Endothelial cell of umbilical vein (primary cell): ENCODE measurements at regions of chr11 and their contacts with region 1.

Region 1: GRCh38 chr11:9460322-9461067 is at the start of gene ZNF143:
- DNase-seq: peak; percentile 100
- H3K4me3 ChIP-seq: peak within 1 kb of the TSS; percentile 92 to 97 (median 94)
- H3K27ac ChIP-seq: peak within 1 kb of the TSS; percentile 95
- H3K4me1 ChIP-seq: peaks cover 15% of the 10 kb centered on the region
- H3K27me3 ChIP-seq: no peaks in the 10 kb centered on the region
- CTCF ChIP-seq: no peak
- POLR2A ChIP-seq: peak; percentile 72
- total RNA-seq, gene ZNF143: 19.0 and 22.1 TPM in 2 replicates

Region 2: GRCh38 chr11:9265211-9266131 is 195.0 kb before region 1 on chr11 and contains the start of gene DENND5A:
- CTCF ChIA-PET with region 1: no interaction called
- POLR2A ChIA-PET with region 1: interaction called, 5 read pairs
- dilution Hi-C with region 1: no loop called
- intact Hi-C with region 1: loop called (anchors 2 kb)
- DNase-seq: peak; percentile 90
- H3K4me3 ChIP-seq: peak within 1 kb of the TSS; percentile 71 to 83 (median 81)
- H3K27ac ChIP-seq: peak within 1 kb of the TSS; percentile 81
- H3K4me1 ChIP-seq: peaks cover 13% of the 10 kb centered on the region
- H3K27me3 ChIP-seq: no peaks in the 10 kb centered on the region
- CTCF ChIP-seq: no peak
- POLR2A ChIP-seq: peak; percentile 88
- total RNA-seq, gene DENND5A: 116 and 117 TPM in 2 replicates

Region 3: GRCh38 chr11:9363954-9364912 is 96.3 kb before region 1 on chr11:
- CTCF ChIA-PET with region 1: no interaction called
- POLR2A ChIA-PET with region 1: no interaction called
- dilution Hi-C with region 1: no loop called
- intact Hi-C with region 1: loop called (anchors 1 kb)
- DNase-seq: peak; percentile 96
- H3K4me3 ChIP-seq: peak overlapping the region in 2 of 3 experiments; percentile 23 to 46
- H3K27ac ChIP-seq: peak overlapping the region; percentile 92
- H3K4me1 ChIP-seq: peaks cover 17% of the 10 kb centered on the region
- H3K27me3 ChIP-seq: no peaks in the 10 kb centered on the region
- CTCF ChIP-seq: no peak
- POLR2A ChIP-seq: peak; percentile 67

Region 4: DNA sequence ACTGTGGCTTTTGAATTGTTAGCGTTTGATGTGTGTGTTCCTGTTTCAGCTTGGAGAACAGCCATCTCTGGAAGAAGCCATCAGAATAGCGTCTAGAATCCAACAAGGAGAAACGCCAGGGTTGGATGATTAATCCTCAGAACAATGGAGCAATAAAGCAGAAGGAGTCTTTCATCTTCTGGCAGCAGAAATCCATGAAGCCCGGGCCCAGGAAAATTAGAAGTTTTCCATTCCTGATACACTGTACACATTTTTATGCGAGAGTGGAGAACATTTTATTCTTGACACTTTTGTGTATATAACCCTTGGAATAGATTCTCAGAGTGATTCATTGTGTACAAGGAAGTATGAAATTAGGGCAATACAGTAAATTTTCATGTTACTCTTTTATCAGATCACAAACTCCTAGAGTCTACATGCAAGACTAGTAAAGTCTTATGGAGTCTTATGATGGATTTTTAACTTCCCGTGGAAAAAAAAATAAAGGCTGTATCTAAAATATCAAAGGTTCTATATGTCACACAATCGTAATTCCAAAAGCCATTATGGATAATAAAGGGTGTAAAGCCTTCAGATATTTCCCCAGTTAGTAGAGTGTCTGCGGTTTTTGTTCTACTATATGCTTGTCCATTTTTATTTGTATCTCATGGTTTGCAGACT is 67.1 kb after region 1 on chr11:
- CTCF ChIA-PET with region 1: no interaction called
- POLR2A ChIA-PET with region 1: interaction called, 3 read pairs
- dilution Hi-C with region 1: no loop called
- intact Hi-C with region 1: loop called (anchors 2 kb)
- DNase-seq: peak; percentile 96
- H3K4me3 ChIP-seq: peak overlapping the region in 1 of 3 experiments; percentile 20
- H3K27ac ChIP-seq: peak overlapping the region; percentile 82
- H3K4me1 ChIP-seq: peaks cover 27% of the 10 kb centered on the region
- H3K27me3 ChIP-seq: no peaks in the 10 kb centered on the region
- CTCF ChIP-seq: no peak
- POLR2A ChIP-seq: peak; percentile 21

Region 5: GRCh38 chr11:9573052-9573774 is 112.7 kb after region 1 on chr11 and contains the start of gene WEE1:
- CTCF ChIA-PET with region 1: no interaction called
- POLR2A ChIA-PET with region 1: interaction called, 6 read pairs
- dilution Hi-C with region 1: no loop called
- intact Hi-C with region 1: loop called (anchors 1 kb)
- DNase-seq: peak; percentile 99
- H3K4me3 ChIP-seq: peak within 1 kb of the TSS; percentile 56 to 97 (median 63)
- H3K27ac ChIP-seq: peak within 1 kb of the TSS; percentile 83
- H3K4me1 ChIP-seq: peaks cover 34% of the 10 kb centered on the region
- H3K27me3 ChIP-seq: no peaks in the 10 kb centered on the region
- CTCF ChIP-seq: no peak
- POLR2A ChIP-seq: peak; percentile 50
- total RNA-seq, gene WEE1: 42.8 and 47.0 TPM in 2 replicates